Right cardiac atrium (tissue), 5 donors: ENCODE measurements at regions of chr2 and their contacts with region 1.

Region 1: DNA sequence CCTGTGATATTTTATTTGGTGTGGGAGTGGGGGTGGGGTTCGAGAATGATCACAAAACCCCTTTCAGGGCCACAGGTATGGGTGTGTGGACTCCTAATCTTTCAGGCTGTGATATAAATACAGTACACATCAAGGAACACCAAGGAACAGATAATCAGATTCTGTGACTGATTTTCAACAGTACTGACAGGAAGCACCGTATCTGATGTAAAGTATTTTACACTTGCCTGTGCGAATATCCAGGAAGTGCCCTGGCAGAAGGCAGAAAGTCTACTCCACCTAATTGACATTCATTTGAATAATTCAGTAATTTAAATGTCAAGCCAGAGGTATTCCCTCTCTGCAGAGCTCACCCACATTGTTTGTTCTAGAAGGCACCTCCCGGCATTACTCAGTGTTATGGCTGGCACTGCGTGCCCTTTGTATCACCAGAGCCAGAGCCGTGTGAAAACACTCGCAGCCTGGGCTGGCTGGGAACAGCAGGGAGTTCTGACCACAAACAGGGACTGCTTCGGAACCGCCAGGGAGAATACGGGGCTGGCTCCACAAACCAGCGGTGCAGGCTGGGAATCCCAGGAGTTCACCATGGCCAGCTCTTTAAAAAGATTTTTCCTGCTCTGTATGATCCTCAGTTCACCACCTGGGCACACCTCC is 91.8 kb downstream of the ACVR1 start:
- DNase-seq: peak; percentile 42 to 70 (median 69)
- ATAC-seq: peak; percentile 74 to 81
- H3K4me3 ChIP-seq: no peak overlapping the region
- H3K27ac ChIP-seq: peak overlapping the region; percentile 63
- H3K4me1 ChIP-seq: peaks cover 21% of the 10 kb centered on the region
- H3K27me3 ChIP-seq: no peaks in the 10 kb centered on the region

Region 2: DNA sequence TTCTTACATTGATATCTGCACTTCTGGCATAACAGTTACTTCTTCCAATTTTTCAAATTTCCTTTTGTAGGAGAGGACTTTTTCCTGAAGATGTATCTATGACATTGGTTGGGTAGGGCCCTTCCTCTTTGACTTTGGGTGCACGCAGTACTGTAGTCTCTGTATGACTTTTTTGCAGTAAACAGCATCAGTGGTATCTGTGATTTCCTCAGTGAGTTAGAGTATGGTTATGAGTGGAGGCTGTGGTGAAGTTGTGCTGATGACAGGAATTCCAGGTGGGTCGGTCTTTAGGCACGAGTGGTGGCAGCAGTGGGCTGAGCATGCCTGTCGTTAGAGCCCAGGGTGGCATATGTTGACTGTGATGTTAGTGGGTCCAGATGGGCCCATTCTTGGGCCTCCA is 173.2 kb before region 1 on chr2:
- intact Hi-C with region 1: no loop called
- DNase-seq: no peak
- ATAC-seq: no peak
- H3K4me3 ChIP-seq: no peak overlapping the region
- H3K27ac ChIP-seq: no peak overlapping the region
- H3K4me1 ChIP-seq: no peaks in the 10 kb centered on the region
- H3K27me3 ChIP-seq: no peaks in the 10 kb centered on the region

Region 3: DNA sequence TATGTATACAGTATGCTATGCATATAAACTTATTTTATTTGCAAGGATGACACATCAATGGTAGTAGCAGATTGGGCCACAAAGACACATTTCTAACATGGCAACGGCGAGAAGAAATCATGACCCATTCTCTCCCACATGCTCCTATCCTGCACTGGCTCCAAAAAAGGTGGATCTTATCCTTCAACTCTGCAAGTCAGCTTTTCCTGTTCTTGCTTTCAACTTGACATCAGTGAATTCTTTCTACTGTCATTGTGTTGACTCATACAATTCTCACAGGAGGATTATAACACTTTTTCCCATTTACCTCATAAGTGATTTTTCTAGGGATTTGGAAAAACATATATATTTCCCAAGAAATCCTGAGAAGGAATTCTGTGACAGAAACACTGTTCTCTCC is 38.7 kb after region 1 on chr2:
- intact Hi-C with region 1: no loop called
- DNase-seq: no peak
- ATAC-seq: peak in 1 of 2 donors; percentile 9
- H3K4me3 ChIP-seq: no peak overlapping the region
- H3K27ac ChIP-seq: no peak overlapping the region
- H3K4me1 ChIP-seq: peaks cover 2% of the 10 kb centered on the region
- H3K27me3 ChIP-seq: no peaks in the 10 kb centered on the region

Region 4: DNA sequence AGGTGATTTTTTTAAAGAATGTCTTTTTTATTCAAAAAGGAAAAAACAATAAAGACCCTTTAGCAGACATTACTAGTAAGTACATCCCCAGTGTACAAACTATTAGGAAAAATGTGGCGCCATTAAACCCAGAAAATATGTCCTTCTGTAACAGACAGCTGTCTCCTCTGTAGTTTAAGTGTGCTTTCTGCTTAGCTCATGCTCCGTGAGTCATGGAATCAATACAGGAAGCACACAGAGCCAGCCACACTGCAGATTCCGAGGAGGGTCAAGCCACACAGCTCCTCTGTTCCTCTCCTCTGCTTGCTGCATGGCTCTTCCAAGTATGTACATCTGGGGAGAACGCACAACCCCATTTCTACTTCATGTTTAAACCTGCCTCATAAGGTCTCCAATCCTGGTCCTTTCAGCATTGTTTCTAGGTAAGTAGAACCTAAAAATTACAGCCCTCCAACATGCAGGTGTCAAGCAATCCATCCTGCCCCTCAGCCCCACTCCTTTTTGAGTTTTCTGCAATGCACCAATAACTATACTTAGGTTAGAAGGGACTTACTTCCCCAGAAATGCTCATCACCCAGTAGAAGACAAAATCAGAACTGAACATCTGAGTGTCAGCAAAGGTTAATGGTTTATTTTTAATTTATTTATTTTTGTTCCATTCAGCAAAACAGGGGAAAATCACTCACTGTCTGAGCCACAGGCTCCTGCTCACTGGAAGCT is 54.3 kb after region 1 on chr2:
- intact Hi-C with region 1: loop called in 1 of 4 experiments (anchors 10 kb)
- DNase-seq: peak; percentile 46 to 66 (median 59)
- ATAC-seq: peak; percentile 82 to 93
- H3K4me3 ChIP-seq: peak overlapping the region; percentile 70
- H3K27ac ChIP-seq: peak overlapping the region; percentile 92
- H3K4me1 ChIP-seq: peaks cover 28% of the 10 kb centered on the region
- H3K27me3 ChIP-seq: no peaks in the 10 kb centered on the region

Region 5: GRCh38 chr2:157876066-157876787 is 91.9 kb after region 1 on chr2 and contains the start of gene ACVR1:
- intact Hi-C with region 1: loop called (anchors 5 to 10 kb)
- DNase-seq: peak; percentile 97 to 99 (median 98)
- ATAC-seq: peak; percentile 97 to 98
- H3K4me3 ChIP-seq: peak within 1 kb of the TSS; percentile 94
- H3K27ac ChIP-seq: peak within 1 kb of the TSS; percentile 98
- H3K4me1 ChIP-seq: peaks cover 7% of the 10 kb centered on the region
- H3K27me3 ChIP-seq: no peaks in the 10 kb centered on the region
- total RNA-seq, gene ACVR1: 41.9 to 59.3 (median 50.5) TPM

Region 6: DNA sequence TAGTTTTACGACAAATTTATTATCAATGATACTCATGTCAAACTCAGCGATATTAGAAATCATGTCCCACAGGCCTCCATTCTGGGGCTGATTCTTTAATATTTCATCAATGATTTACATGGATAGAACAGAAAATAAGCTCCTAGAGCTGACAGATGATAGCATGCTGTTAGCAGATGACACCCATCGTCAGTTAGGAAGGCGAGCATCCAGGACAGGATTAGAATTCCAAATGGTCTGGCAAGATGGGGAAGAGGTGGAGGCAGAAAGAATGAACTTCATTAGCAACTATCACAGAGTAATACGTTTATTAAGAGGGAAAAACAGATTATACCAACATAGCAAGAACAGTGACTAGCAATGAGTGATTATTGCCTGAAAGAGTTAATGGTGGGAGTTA is 138.0 kb after region 1 on chr2:
- intact Hi-C with region 1: no loop called
- DNase-seq: no peak
- ATAC-seq: no peak
- H3K4me3 ChIP-seq: no peak overlapping the region
- H3K27ac ChIP-seq: no peak overlapping the region
- H3K4me1 ChIP-seq: no peaks in the 10 kb centered on the region
- H3K27me3 ChIP-seq: no peaks in the 10 kb centered on the region